Activated CD4-positive, alpha-beta memory T cell treated with anti-CD3 and anti-CD28 coated beads for 36 hours (primary cell): ENCODE measurements at regions of chr17 and their contacts with region 1.

Region 1: DNA sequence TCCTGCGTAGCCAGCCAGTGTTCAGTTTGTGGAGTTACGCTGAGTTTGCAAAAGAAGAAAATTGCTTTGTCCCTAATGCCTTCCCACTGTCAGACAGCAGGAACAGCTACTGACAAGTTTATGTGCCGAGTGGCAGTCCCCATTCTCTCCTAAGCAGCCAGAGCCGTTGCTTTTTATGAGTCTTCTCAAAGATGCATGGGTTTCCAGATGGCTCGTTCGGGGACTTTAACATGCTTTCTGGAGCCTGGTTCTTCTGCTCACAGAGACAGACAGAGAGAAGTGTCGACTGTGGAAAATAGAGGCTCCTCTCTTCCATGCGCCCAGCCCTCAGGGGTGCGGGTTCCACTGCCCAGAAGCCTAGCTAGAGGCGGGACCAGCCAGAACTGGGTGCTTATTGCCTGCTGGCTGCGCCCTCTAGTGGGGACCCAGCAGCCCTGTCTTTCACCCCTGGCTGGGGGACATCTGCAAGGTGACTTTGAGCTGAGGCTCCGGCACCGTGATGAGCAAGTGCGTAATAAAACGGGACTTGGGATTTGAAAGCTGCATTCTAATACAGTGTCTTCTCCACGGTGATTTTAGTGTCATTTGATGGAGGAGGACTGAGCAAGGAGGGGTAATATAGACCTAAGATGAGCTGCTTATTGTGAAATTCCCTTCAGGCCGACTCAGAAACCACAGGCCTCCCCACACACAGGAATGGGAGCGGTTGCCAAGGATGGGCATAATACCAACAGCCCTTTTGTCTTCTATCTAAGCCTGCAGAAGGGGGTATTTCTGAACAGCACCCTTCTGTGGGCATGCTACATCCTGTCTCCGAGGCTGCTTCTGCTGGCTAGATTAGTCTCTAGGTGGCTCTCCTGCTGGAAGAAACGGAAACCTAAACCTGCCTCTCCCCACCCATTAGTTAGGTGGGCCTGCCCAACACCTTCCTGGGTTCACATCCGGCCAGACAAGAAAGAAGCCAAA is 73.1 kb downstream of the CCDC182 start:
- DNase-seq: peak; percentile 80
- H3K4me3 Mint-ChIP-seq: no peak overlapping the region
- H3K27ac Mint-ChIP-seq: peak overlapping the region; percentile 57
- H3K4me1 Mint-ChIP-seq: peaks cover 30% of the 10 kb centered on the region
- H3K27me3 Mint-ChIP-seq: no peaks in the 10 kb centered on the region

Region 2: DNA sequence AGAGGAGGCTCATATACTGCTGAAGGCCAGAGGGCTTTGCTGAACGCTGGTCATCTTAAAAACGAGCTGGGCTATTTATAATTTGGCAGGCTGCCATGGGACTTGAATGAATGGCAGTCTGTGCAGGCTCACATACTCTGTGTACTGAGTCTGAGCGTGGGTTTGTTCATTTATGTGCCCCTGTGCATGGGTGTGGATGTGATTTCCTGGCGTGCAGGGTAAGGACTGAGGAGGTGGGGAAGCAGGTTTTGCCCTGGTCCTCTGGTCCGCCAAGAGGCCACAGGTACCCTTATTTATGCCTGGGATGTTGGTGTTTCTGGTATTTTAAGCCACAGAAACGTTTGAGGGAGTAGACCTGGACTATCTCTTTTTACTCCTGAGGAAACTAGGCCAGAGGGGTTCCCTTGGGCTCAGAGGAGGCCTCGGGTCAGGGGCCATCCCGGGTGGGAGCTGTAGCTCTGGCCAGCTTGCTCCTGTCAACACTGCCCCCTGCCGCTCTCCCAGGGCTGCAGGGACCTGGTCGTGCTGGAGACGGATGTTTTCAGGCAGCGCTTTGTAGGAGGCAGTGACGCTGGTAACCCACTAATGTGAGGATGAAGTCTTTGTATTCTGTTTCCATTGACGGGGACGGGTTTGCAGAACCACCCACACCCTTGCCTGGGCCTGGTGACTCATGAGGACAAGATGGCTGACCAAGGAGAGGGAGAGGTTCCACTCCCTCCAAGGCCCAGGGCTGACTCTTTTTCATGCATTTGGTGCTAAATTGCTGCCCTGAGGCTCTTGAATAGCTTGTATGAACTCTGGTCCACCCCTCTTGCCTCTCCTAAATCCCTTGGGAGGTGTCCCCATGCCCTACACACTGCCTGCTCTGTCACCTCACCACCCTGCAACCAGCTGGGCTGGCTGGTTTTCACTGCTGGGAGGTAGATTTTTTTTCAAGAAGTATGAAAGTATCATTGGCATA is 231.1 kb before region 1 on chr17:
- CTCF ChIA-PET with region 1: interaction called, 10 read pairs
- POLR2A ChIA-PET with region 1: no interaction called
- intact Hi-C with region 1: loop called (anchors 5 kb)
- DNase-seq: peak; percentile 93
- H3K4me3 Mint-ChIP-seq: peak overlapping the region; percentile 37
- H3K27ac Mint-ChIP-seq: peak overlapping the region; percentile 98
- H3K4me1 Mint-ChIP-seq: peaks cover 84% of the 10 kb centered on the region
- H3K27me3 Mint-ChIP-seq: no peaks in the 10 kb centered on the region

Region 3: GRCh38 chr17:57535249-57535966 is 136.5 kb before region 1 on chr17:
- CTCF ChIA-PET with region 1: no interaction called
- POLR2A ChIA-PET with region 1: no interaction called
- intact Hi-C with region 1: no loop called
- DNase-seq: no peak
- H3K4me3 Mint-ChIP-seq: no peak overlapping the region
- H3K27ac Mint-ChIP-seq: no peak overlapping the region
- H3K4me1 Mint-ChIP-seq: peaks cover 18% of the 10 kb centered on the region
- H3K27me3 Mint-ChIP-seq: no peaks in the 10 kb centered on the region

Region 4: GRCh38 chr17:57604771-57605674 is 66.9 kb before region 1 on chr17:
- CTCF ChIA-PET with region 1: interaction called, 144 read pairs
- POLR2A ChIA-PET with region 1: interaction called, 3 read pairs
- intact Hi-C with region 1: loop called (anchors 2 kb)
- DNase-seq: peak; percentile 54
- H3K4me3 Mint-ChIP-seq: peak overlapping the region; percentile 34
- H3K27ac Mint-ChIP-seq: peak overlapping the region; percentile 95
- H3K4me1 Mint-ChIP-seq: peaks cover 82% of the 10 kb centered on the region
- H3K27me3 Mint-ChIP-seq: no peaks in the 10 kb centered on the region

Region 5: GRCh38 chr17:57783106-57783742 is 111.3 kb after region 1 on chr17:
- CTCF ChIA-PET with region 1: interaction called, 14 read pairs
- POLR2A ChIA-PET with region 1: no interaction called
- intact Hi-C with region 1: no loop called
- DNase-seq: peak; percentile 86
- H3K4me3 Mint-ChIP-seq: no peak overlapping the region
- H3K27ac Mint-ChIP-seq: no peak overlapping the region
- H3K4me1 Mint-ChIP-seq: no peaks in the 10 kb centered on the region
- H3K27me3 Mint-ChIP-seq: peaks cover 19% of the 10 kb centered on the region